ENCODE measurements at regions of chr9 and their contacts with region 1.

Region 1: DNA sequence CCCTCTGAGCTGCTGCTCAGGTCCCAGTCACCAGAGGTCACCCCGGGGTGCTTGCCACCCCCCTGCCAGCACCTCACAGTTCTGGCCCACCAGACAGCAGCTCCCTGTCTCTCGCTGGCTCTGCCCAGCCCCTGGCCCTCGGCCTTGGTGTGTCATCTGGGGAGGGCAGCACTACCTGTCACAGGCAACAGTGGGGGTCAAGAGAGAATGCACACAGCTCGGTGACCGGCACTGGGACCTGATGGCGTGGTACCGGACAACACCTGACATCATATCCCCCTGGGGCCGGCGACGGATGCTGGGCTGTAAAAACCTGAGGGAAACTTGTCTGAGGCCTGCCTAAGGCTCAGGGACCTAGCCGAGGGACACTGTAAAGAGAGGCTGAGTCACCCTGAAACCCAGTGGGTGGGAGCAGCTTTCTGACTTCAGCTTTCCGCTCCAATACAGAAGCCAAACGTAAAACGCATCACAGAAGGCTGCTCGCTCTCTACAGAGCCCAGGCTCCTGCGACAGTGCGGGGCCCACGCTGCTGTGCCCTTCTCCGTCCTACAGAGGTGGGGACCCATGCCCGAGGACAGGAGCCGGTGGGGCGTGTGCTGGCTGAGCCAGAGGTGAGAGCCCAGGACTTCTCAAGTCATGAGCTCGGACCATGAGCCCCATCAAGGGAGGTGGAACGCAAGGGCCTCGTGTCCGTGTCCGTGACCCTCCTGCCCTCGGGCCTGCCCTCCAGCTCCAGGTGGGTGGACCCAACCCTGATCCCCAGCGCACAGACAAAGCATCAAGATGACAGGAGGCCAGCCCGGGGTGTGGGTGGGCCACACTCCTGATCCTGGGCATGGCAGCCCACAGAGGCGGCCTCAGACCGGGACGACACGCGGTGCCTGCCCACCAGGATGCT is 5.3 kb downstream of the RALGDS start:
- DNase-seq: no peak
- H3K4me3 ChIP-seq: no peak overlapping the region
- H3K27ac ChIP-seq: no peak overlapping the region
- H3K4me1 ChIP-seq: peaks cover 17% of the 10 kb centered on the region
- H3K27me3 ChIP-seq: no peaks in the 10 kb centered on the region
- CTCF ChIP-seq: no peak

Region 2: DNA sequence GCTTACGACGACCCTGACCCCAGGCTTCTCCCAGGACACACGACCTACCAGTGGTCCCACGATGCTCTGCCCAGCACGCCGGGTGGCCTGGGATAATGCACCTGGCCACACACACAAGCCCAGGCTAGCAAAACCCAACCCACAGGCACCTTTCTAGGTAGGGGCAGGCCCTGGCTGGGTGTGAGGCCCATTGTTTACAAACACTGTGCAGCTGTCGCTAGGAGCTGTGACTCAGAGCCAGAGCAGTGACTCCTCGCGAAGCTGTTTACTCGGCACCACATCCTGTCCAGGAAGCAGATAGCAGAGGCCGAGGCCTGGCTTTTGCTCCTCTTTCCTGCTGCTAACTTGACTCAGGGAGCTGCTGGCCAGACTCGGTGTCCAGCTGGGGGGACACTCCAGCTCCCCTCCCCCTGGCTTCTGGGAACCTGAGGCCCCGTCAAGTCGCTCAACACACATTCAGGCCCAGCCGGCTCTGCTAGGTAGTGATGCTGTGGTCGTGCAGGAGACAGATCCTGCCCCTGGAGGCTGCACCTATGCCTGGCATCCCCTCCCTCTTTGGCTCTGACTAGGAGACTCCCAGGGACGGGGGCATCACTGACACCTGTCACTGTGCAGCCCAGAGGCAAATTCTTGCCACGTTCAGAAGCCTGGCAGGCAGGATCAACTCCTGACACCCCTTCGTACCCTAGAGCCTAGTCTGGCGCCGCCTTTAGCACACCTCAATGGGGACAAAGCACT is 18.2 kb after region 1 on chr9:
- CTCF ChIA-PET with region 1: interaction called, 5 read pairs
- POLR2A ChIA-PET with region 1: interaction called, 5 read pairs
- intact Hi-C with region 1: loop called (anchors 1 kb)
- DNase-seq: peak; percentile 97 to 98
- H3K4me3 ChIP-seq: no peak overlapping the region; the same call in 1 of the 2 replicates
- H3K27ac ChIP-seq: peak overlapping the region; percentile 70
- H3K4me1 ChIP-seq: peaks cover 47% of the 10 kb centered on the region
- H3K27me3 ChIP-seq: no peaks in the 10 kb centered on the region
- CTCF ChIP-seq: no peak

Region 3: DNA sequence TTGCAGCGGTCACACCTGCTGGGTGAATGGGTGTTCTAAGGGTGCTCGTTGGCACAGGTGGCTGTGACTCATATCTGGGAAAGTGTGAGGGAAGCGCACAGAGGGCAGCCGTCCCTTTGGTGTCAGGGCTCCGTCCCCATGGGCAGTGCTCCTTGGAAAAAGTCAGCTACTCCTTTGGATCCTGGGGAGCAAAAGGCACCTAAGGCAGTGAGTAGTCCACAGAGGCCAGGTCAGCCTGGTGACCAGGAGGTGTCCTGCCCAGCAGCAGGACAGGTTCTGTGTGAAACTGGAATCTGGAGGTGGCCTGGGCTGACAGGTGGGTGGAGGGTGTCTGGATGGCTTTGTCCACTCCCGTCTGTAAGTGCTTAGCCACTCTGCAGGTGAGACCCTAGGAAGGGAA is 66.5 kb after region 1 on chr9:
- CTCF ChIA-PET with region 1: no interaction called
- POLR2A ChIA-PET with region 1: no interaction called
- intact Hi-C with region 1: no loop called
- DNase-seq: no peak
- H3K4me3 ChIP-seq: no peak overlapping the region
- H3K27ac ChIP-seq: no peak overlapping the region
- H3K4me1 ChIP-seq: no peaks in the 10 kb centered on the region
- H3K27me3 ChIP-seq: peaks cover 40% of the 10 kb centered on the region
- CTCF ChIP-seq: no peak

Region 4: DNA sequence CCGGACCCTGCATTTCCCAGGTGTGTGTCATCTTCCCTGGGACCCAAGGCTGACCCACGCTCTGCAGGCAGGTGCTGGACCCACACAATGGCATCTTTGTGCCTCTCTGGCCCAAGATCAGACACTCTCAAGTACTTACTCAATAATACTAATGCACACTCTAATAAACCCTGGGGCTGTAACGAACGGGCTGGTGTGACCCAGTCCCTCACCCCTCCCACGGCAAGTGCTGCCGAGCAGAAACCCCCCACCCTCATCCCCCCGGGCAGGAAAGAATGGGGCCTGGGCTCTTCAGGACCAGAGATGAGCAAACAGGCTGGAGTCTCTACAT is 94.5 kb after region 1 on chr9:
- CTCF ChIA-PET with region 1: no interaction called
- POLR2A ChIA-PET with region 1: no interaction called
- intact Hi-C with region 1: no loop called
- DNase-seq: peak in 1 of 2 experiments; percentile 61
- H3K4me3 ChIP-seq: no peak overlapping the region
- H3K27ac ChIP-seq: no peak overlapping the region
- H3K4me1 ChIP-seq: peaks cover 15% of the 10 kb centered on the region; the same call in 1 of the 2 replicates
- H3K27me3 ChIP-seq: peaks cover 14% of the 10 kb centered on the region
- CTCF ChIP-seq: no peak

Measured in PC-9 (cell line).